Activated CD4-positive, alpha-beta memory T cell treated with anti-CD3 and anti-CD28 coated beads for 36 hours (primary cell): ENCODE measurements at regions of chr11 and their contacts with region 1.

Region 1: DNA sequence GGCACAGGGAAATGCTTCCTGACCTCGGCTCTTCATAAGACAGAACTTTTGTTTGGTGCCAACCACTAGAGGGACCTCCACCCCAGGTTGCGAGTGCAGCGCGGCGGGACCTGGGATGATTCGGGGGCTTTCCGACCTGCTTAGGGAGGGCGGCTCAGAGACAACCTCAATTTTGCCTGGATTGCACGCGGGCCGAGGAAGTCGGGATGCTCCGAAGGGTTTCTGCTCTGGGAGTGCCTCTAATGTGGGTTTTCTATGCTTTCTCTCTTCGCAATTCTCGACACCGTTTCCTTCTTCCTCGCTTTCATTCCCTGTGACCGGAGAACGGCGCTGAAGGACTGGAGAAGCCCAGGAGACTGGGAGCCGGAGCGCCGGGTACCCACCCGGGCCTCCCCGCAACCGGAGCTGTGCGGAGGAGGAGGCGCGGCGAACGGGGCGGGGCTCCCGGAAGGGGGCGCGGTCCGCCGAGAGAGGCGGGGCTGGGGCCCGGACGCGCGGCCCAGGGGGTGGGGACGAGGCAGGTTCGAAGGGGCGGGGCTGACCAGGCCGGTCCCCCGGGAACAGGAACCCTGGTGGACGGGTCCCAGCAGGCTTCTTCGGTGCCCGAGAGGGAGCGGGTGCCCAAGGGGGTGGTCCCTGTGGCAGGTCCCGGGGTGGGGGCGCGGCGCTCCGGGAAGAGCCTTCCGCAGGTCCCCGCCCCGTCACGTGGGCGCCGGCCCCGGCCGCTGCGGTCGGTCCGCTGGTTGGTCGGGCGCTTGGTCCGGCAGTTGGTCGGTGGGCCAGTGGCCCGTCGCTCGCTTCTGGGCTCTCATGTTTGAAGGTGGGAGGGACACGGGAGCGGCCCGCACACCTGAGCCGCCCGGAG is at the start of gene PPFIBP2:
- DNase-seq: peak; percentile 88
- H3K4me3 Mint-ChIP-seq: peak within 1 kb of the TSS; percentile 85
- H3K27ac Mint-ChIP-seq: peak within 1 kb of the TSS; percentile 80
- H3K4me1 Mint-ChIP-seq: peaks cover 24% of the 10 kb centered on the region
- H3K27me3 Mint-ChIP-seq: no peaks in the 10 kb centered on the region
- total RNA-seq, gene PPFIBP2: 8.8 to 9.2 TPM

Region 2: DNA sequence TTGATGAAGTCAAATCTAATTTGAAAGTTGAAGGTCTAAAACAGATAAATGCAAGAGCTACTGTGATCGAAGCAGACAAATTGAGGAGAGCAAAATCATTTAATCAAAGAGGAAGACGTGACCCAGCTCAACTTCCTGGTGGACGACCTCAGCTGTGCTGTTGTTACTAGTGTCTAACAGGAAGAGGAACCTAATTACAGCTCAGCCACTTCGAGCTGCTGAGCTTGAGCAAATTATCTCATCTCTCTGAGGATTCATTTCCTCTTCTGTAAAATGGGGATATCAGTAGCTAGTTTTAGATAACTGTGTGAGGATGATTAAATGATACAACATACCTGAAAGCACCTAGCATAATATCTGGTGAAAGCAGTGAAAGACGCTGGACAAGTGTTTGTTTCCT is 76.8 kb before region 1 on chr11:
- CTCF ChIA-PET with region 1: no interaction called
- POLR2A ChIA-PET with region 1: no interaction called
- intact Hi-C with region 1: no loop called
- DNase-seq: peak; percentile 23
- H3K4me3 Mint-ChIP-seq: no peak overlapping the region
- H3K27ac Mint-ChIP-seq: peak overlapping the region; percentile 67
- H3K4me1 Mint-ChIP-seq: peaks cover 14% of the 10 kb centered on the region
- H3K27me3 Mint-ChIP-seq: no peaks in the 10 kb centered on the region

Region 3: DNA sequence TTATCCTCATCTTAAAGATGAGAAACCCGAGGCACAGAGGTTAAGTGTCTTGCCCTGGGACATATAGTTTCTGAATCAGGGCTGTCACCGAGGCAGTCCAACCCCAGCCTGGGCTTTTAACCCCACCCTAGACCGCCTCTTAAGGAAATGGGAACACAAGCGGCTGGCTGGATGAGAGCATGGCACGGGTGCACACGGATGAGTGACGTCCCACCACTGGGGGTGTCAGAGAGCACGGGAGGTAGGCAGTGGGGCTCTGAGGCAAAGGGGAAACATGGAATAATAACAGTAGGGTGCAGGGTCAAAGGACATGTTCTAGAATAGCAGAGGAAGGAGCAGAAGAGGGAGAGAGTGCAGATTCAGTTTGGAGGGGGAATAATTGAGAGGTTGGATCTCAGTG is 22.6 kb after region 1 on chr11:
- CTCF ChIA-PET with region 1: interaction called, 33 read pairs
- POLR2A ChIA-PET with region 1: interaction called, 4 read pairs
- intact Hi-C with region 1: loop called (anchors 2 kb)
- DNase-seq: no peak
- H3K4me3 Mint-ChIP-seq: no peak overlapping the region
- H3K27ac Mint-ChIP-seq: no peak overlapping the region
- H3K4me1 Mint-ChIP-seq: peaks cover 55% of the 10 kb centered on the region
- H3K27me3 Mint-ChIP-seq: no peaks in the 10 kb centered on the region

Region 4: GRCh38 chr11:7548659-7549274 is 35.3 kb after region 1 on chr11:
- CTCF ChIA-PET with region 1: interaction called, 3 read pairs
- POLR2A ChIA-PET with region 1: no interaction called
- intact Hi-C with region 1: loop called (anchors 1 kb)
- DNase-seq: peak; percentile 49
- H3K4me3 Mint-ChIP-seq: no peak overlapping the region
- H3K27ac Mint-ChIP-seq: no peak overlapping the region
- H3K4me1 Mint-ChIP-seq: peaks cover 5% of the 10 kb centered on the region
- H3K27me3 Mint-ChIP-seq: no peaks in the 10 kb centered on the region

Region 5: DNA sequence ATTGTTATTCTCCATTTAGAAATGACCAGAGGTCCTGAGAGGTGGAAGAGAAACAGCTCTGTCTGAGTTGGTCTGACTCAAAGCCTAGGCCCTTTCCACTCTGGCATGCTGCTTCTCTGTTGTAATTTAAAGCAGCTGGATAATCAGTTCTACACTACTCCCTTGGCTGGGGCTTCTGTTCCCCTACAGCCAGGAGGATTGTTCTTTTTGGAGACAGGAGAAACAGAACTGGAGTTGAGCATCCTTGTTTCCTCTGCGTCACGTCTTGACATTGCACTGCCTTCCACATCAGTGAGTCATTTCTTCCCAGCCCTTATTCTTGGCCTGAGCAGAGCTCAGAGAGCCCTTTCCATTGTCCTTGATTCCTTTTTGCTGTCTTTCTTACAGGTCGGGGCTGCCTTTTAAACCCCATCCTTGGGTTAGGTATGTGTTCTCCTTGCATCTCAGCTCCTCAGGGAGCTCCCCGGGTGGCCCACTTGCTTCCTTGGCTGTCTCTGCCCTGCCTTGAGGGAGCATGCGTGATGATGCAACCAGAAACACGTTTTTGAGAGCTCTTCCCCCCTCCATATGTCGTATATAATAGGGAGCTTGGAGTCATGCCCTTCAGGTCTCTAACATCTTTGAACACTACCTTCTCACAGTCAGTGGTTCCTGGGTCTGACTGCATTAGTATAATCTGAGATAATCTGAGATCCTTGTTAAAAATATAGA is 124.1 kb after region 1 on chr11:
- CTCF ChIA-PET with region 1: no interaction called
- POLR2A ChIA-PET with region 1: no interaction called
- intact Hi-C with region 1: no loop called
- DNase-seq: no peak
- H3K4me3 Mint-ChIP-seq: no peak overlapping the region
- H3K27ac Mint-ChIP-seq: no peak overlapping the region
- H3K4me1 Mint-ChIP-seq: no peaks in the 10 kb centered on the region
- H3K27me3 Mint-ChIP-seq: no peaks in the 10 kb centered on the region

Region 6: DNA sequence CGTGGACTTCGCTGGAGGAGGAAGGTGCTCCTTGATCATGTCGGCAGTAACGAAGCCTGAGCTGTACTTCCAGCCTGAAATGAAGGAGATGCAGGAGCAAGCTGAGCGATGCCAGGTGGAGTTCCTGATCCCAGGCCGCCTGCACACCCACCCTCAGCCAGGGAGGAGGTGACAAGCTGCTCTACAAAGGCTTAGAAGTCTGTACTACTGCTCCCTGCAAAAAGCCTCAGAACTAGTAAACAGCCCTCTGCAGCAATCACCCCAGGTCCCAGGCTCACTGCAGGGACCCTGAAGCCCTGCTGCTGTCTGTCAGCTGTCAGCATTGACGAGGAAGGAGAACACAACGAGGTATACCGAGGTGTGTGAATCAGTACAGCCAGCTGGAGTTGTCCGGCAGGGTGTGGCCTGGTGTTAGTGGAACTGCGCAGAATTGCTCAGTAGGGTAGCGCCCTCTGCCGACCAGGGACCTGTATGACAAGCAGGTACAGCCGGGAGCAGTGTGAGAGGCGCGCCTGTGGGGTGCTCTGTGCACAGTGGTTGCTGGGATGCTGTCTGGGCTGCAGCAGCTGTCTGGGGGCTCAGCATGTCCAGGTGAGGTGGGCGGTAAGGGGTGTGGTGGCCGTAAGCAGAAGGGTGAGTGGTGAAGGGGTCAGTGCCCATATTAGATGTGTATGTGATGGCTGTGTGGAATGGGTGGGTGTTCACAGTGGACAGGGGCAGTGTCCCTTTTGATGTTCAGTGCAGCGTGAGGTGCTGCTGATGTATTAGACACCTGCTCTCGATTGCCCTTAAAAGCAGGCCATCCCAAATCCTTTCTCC is 152.2 kb after region 1 on chr11:
- CTCF ChIA-PET with region 1: interaction called, 41 read pairs
- POLR2A ChIA-PET with region 1: no interaction called
- intact Hi-C with region 1: loop called (anchors 1 kb)
- DNase-seq: peak; percentile 85
- H3K4me3 Mint-ChIP-seq: no peak overlapping the region
- H3K27ac Mint-ChIP-seq: no peak overlapping the region
- H3K4me1 Mint-ChIP-seq: peaks cover under 1% of the 10 kb centered on the region
- H3K27me3 Mint-ChIP-seq: no peaks in the 10 kb centered on the region

Region 7: GRCh38 chr11:7688238-7688826 is 174.9 kb after region 1 on chr11:
- CTCF ChIA-PET with region 1: interaction called, 12 read pairs
- POLR2A ChIA-PET with region 1: no interaction called
- intact Hi-C with region 1: no loop called
- DNase-seq: no peak
- H3K4me3 Mint-ChIP-seq: no peak overlapping the region
- H3K27ac Mint-ChIP-seq: no peak overlapping the region
- H3K4me1 Mint-ChIP-seq: peaks cover 8% of the 10 kb centered on the region
- H3K27me3 Mint-ChIP-seq: peaks cover 38% of the 10 kb centered on the region

Region 8: DNA sequence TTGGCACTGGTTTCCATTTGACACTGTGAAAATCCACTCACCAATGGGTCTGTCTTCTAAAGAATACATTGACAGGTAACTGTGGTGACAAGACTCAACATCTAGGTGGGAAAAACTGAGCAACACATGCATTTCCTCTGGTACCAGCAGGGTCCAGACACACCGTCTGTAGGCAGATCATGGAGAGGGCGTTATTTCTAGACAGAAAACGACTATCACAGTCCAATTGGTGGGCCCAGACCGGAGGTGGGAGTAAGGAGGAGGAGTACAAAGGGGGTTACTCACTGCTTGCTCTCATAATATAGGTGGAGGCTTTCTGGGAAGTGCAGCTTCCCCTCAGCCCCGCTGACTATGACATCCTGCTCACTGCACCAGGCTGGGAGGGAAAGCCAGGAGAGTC is 183.0 kb after region 1 on chr11:
- CTCF ChIA-PET with region 1: interaction called, 23 read pairs
- POLR2A ChIA-PET with region 1: no interaction called
- intact Hi-C with region 1: loop called (anchors 2 kb)
- DNase-seq: peak; percentile 21
- H3K4me3 Mint-ChIP-seq: no peak overlapping the region
- H3K27ac Mint-ChIP-seq: no peak overlapping the region
- H3K4me1 Mint-ChIP-seq: peaks cover 5% of the 10 kb centered on the region
- H3K27me3 Mint-ChIP-seq: peaks cover 25% of the 10 kb centered on the region

Region 9: DNA sequence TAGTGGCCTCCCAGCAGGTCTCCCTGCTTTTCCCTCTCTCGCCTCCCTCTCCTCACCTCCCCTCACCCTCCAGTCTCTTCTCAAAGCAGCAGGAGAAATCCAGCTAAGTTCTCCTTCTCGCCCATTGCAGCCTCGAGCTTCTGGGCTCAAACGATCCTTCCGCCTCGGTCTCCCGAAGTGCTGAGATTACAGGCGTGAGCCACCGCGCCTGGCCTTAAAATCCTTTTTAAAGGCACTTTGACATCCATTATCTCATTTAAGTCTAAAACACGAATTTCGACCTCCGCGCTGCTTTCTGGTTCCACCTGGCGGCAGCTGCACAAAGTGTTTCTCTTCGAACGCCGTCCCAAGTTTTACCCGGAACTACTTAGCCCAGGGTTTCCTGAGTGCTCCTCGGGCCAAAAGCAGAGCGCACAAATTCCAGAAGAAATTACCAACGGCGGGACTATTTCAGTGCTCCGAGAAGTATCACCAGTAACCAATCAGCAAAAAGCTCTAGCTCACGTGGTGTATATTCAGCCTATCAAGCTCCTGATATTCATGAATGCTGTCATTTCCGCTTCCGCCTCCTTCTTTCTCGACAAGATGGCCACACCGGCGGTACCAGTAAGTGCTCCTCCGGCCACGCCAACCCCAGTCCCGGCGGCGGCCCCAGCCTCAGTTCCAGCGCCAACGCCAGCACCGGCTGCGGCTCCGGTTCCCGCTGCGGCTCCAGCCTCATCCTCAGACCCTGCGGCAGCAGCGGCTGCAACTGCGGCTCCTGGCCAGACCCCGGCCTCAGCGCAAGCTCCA is 473.5 kb after region 1 on chr11 and contains the start of gene EIF3F:
- CTCF ChIA-PET with region 1: interaction called, 3 read pairs
- POLR2A ChIA-PET with region 1: no interaction called
- intact Hi-C with region 1: loop called (anchors 1 kb)
- DNase-seq: peak; percentile 93
- H3K4me3 Mint-ChIP-seq: peak within 1 kb of the TSS; percentile 93
- H3K27ac Mint-ChIP-seq: peak within 1 kb of the TSS; percentile 91
- H3K4me1 Mint-ChIP-seq: peaks cover 40% of the 10 kb centered on the region
- H3K27me3 Mint-ChIP-seq: no peaks in the 10 kb centered on the region
- total RNA-seq, gene EIF3F: 309 to 319 TPM